Prostate gland (tissue), 2 donors: ENCODE measurements at regions of chr15 and their contacts with region 1.

Region 1: DNA sequence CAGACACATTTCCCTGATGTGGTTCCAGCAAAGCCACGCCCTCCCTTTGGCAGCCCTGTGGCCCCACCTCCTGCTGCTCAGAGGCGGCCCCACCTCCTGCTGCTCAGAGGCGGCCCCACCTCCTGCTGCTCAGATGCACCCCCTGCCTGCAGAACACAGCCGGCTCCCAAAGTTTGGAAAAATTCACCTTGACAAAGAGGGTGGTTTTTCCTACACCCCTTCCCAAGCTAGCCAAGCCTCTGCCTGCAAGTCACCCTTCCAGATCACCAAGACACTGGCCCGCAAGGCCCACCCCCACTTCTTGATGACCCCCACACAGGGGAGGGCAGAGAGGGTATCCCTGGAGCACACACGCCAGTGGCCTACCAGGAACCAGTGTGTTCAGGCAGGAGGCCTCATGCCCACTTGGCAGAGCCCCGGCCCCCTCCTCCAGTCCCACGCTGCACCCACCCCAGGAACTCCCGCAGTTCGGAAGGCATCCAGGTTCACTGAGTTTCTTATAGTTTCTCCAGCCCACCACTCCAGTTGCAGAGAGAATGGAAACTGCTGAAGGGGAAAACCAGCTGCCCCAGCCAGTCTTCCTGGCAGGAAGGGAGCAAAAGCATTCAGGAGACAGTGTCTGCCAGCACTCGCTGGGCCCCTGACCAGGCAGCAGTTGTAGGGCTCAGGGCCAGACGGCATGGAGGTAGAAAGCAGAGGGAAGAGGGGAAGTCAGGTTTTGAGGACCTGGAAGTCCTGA is 2.3 kb upstream of the HAPLN3 start:
- DNase-seq: peak; percentile 81
- H3K4me3 ChIP-seq: no peak overlapping the region
- H3K27ac ChIP-seq: peak overlapping the region; percentile 48 to 55
- H3K4me1 ChIP-seq: no peaks in the 10 kb centered on the region
- H3K27me3 ChIP-seq: no peaks in the 10 kb centered on the region
- CTCF ChIP-seq: peak; percentile 18 to 79 (median 60)
- POLR2A ChIP-seq: no peak

Region 2: GRCh38 chr15:88467073-88467934 is 430.3 kb before region 1 on chr15 and contains the starts of genes MRPL46 and MRPS11:
- intact Hi-C with region 1: loop called (anchors 5 kb)
- DNase-seq: peak; percentile 88
- H3K4me3 ChIP-seq: peak within 1 kb of the TSS; percentile 66 to 84
- H3K27ac ChIP-seq: peak within 1 kb of the TSS; percentile 87 to 92
- H3K4me1 ChIP-seq: no peaks in the 10 kb centered on the region
- H3K27me3 ChIP-seq: no peaks in the 10 kb centered on the region
- CTCF ChIP-seq: no peak
- POLR2A ChIP-seq: no peak
- total RNA-seq, gene MRPL46: 20.4 to 32.0 TPM
- total RNA-seq, gene MRPS11: 35.7 to 36.4 TPM

Region 3: GRCh38 chr15:88580532-88580931 is 317.1 kb before region 1 on chr15:
- intact Hi-C with region 1: no loop called
- DNase-seq: no peak
- H3K4me3 ChIP-seq: no peak overlapping the region
- H3K27ac ChIP-seq: no peak overlapping the region
- H3K4me1 ChIP-seq: no peaks in the 10 kb centered on the region
- H3K27me3 ChIP-seq: no peaks in the 10 kb centered on the region
- CTCF ChIP-seq: no peak
- POLR2A ChIP-seq: no peak

Region 4: GRCh38 chr15:88627463-88627862 is 270.2 kb before region 1 on chr15:
- intact Hi-C with region 1: loop called (anchors 5 kb)
- DNase-seq: no peak
- H3K4me3 ChIP-seq: no peak overlapping the region
- H3K27ac ChIP-seq: no peak overlapping the region
- H3K4me1 ChIP-seq: peaks cover 3% of the 10 kb centered on the region
- H3K27me3 ChIP-seq: no peaks in the 10 kb centered on the region
- CTCF ChIP-seq: no peak
- POLR2A ChIP-seq: no peak

Region 5: GRCh38 chr15:89321521-89322410 is 424.1 kb after region 1 on chr15:
- intact Hi-C with region 1: loop called (anchors 10 kb)
- DNase-seq: no peak
- H3K4me3 ChIP-seq: no peak overlapping the region
- H3K27ac ChIP-seq: no peak overlapping the region
- H3K4me1 ChIP-seq: no peaks in the 10 kb centered on the region
- H3K27me3 ChIP-seq: no peaks in the 10 kb centered on the region
- CTCF ChIP-seq: no peak
- POLR2A ChIP-seq: no peak